ENCODE measurements at regions of chr10 and their contacts with region 1.

Region 1: GRCh38 chr10:103859161-103860086 is 4.0 kb upstream of the SH3PXD2A start:
- DNase-seq: no peak
- ATAC-seq: peak; percentile 70
- H3K4me3 Mint-ChIP-seq: no peak overlapping the region
- H3K27ac Mint-ChIP-seq: no peak overlapping the region
- H3K4me1 Mint-ChIP-seq: peaks cover 10% of the 10 kb centered on the region
- H3K27me3 Mint-ChIP-seq: peaks cover 24% of the 10 kb centered on the region
- CTCF ChIP-seq: no peak

Region 2: GRCh38 chr10:103598654-103599115 is 260.7 kb before region 1 on chr10:
- CTCF ChIA-PET with region 1: no interaction called
- POLR2A ChIA-PET with region 1: no interaction called
- intact Hi-C with region 1: loop called (anchors 5 kb)
- DNase-seq: no peak
- ATAC-seq: no peak
- H3K4me3 Mint-ChIP-seq: no peak overlapping the region
- H3K27ac Mint-ChIP-seq: no peak overlapping the region
- H3K4me1 Mint-ChIP-seq: no peaks in the 10 kb centered on the region
- H3K27me3 Mint-ChIP-seq: no peaks in the 10 kb centered on the region
- CTCF ChIP-seq: no peak

Region 3: DNA sequence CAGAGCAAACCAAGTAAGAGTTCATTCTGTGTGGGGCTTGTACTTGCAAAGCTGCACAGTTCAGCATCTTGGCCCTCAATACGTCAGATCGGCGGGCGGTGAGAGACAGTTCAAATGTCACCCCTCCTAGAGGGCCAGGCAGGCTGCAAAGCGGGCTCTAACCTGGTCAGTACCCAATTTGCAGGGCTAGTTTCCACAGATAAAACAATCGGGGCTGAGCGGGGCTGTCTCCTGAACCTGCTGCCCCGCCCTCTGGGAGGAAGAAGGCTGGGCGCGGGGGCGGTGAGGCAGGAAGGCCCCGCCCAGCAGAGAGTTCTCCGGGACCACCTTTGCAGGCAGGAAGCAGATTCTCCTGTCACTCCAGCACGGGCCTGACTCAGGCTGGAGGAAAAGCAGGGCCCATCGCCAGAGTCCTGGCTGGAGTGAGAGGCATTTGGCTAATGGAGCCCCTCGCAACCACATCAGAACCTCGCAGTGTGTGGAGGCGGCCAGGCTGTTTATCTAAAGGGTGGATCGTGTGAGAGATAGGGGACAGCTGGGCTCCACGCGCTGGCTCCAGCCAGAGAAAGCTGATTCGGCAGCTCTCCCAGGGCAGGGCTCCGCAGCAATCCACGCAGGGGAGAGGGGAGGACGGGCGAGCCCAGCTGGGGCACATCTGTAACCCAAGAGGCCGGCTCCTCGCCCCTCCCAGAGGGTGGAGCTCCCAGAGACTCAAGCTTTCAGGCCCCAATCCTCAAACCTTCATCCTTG is 87.2 kb before region 1 on chr10:
- CTCF ChIA-PET with region 1: no interaction called
- POLR2A ChIA-PET with region 1: no interaction called
- intact Hi-C with region 1: loop called (anchors 10 kb)
- DNase-seq: peak; percentile 36
- ATAC-seq: peak; percentile 84
- H3K4me3 Mint-ChIP-seq: peak overlapping the region; percentile 90
- H3K27ac Mint-ChIP-seq: peak overlapping the region; percentile 71
- H3K4me1 Mint-ChIP-seq: peaks cover 47% of the 10 kb centered on the region
- H3K27me3 Mint-ChIP-seq: peaks cover 4% of the 10 kb centered on the region
- CTCF ChIP-seq: no peak

Region 4: DNA sequence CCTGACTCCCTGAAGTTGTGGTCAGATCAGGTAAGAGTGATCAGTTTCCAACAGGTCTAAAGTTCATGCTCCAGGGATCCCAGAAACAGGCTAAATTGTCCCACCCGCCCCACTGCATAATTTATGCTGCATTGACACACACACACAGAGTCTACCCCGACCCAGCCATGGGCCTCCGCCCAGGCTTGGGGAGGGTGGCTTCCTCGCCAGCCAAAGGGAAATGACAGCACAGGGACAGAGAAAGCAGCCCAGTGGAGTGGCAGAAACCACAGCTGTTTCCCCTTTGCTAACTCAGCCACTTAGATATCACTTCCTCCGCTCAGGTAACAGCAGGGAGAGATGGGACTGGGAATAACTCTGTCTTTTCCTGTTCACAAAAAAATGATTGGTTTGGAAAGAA is 13.5 kb before region 1 on chr10:
- CTCF ChIA-PET with region 1: no interaction called
- POLR2A ChIA-PET with region 1: no interaction called
- intact Hi-C with region 1: loop called (anchors 1 kb)
- DNase-seq: peak; percentile 27
- ATAC-seq: peak; percentile 95
- H3K4me3 Mint-ChIP-seq: peak overlapping the region; percentile 36
- H3K27ac Mint-ChIP-seq: no peak overlapping the region
- H3K4me1 Mint-ChIP-seq: peaks cover 17% of the 10 kb centered on the region
- H3K27me3 Mint-ChIP-seq: peaks cover 20% of the 10 kb centered on the region
- CTCF ChIP-seq: no peak

Measured in activated B cell treated with CpG ODN at 0.5 μM for 24 hours (primary cell).